ENCODE measurements at regions of chr13 and their contacts with region 1.

Region 1: GRCh38 chr13:30132623-30133553 is 174.5 kb downstream of the KATNAL1 start:
- DNase-seq: peak; percentile 77 to 99
- H3K4me3 ChIP-seq: no peak overlapping the region
- H3K4me1 ChIP-seq: no peaks in the 10 kb centered on the region
- H3K27me3 ChIP-seq: 0 out of 2 replicates have a peak, but pooled peaks cover 3% of the 10 kb centered on the region

Region 2: GRCh38 chr13:30334663-30335386 is 201.9 kb after region 1 on chr13:
- in situ Hi-C with region 1: loop called (anchors 10 kb)
- DNase-seq: peak in 1 of 2 experiments; percentile 56
- H3K4me3 ChIP-seq: no peak overlapping the region
- H3K4me1 ChIP-seq: peaks cover 23% of the 10 kb centered on the region
- H3K27me3 ChIP-seq: no peaks in the 10 kb centered on the region

Region 3: DNA sequence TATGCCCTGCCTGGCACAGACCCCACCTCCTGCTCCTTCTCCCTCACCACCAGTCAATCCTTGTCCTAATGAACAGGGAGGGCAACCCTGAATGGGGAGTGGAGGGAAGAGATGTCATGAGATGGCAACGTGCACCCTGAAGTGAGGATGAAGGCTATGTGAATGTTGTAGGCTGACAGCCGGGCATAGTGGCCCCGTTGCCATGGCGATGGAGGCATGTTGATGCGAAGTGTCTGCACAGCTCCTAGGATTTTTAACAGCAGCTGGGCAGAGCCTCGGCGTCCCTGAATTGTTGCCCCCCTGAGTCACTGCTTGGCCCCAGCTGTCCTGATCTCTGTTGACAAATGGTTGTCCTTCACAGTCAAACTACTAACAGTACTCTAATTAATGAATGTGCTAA is 597.6 kb after region 1 on chr13:
- in situ Hi-C with region 1: no loop called
- DNase-seq: peak in 1 of 2 experiments; percentile 52
- H3K4me3 ChIP-seq: no peak overlapping the region
- H3K4me1 ChIP-seq: no peaks in the 10 kb centered on the region
- H3K27me3 ChIP-seq: no peaks in the 10 kb centered on the region

Region 4: GRCh38 chr13:30802953-30803478 is 670.1 kb after region 1 on chr13:
- in situ Hi-C with region 1: loop called (anchors 10 kb)
- DNase-seq: peak; percentile 57 to 88
- H3K4me3 ChIP-seq: no peak overlapping the region
- H3K4me1 ChIP-seq: peaks cover 2% of the 10 kb centered on the region
- H3K27me3 ChIP-seq: no peaks in the 10 kb centered on the region

Region 5: GRCh38 chr13:31044377-31045285 is 911.7 kb after region 1 on chr13:
- in situ Hi-C with region 1: loop called (anchors 25 kb)
- DNase-seq: peak; percentile 63 to 83
- H3K4me3 ChIP-seq: no peak overlapping the region
- H3K4me1 ChIP-seq: peaks cover 11% of the 10 kb centered on the region
- H3K27me3 ChIP-seq: no peaks in the 10 kb centered on the region; the same call in 1 of the 2 replicates

Measured in HAP-1 (cell line).